ENCODE measurements at regions of chr12 and their contacts with region 1.

Region 1: GRCh38 chr12:76455582-76456345 is 103.8 kb downstream of the OSBPL8 start:
- DNase-seq: peak; percentile 89
- H3K4me3 ChIP-seq: no peak overlapping the region
- H3K27ac ChIP-seq: peak overlapping the region; percentile 97
- H3K4me1 ChIP-seq: peaks cover 27% of the 10 kb centered on the region
- H3K27me3 ChIP-seq: no peaks in the 10 kb centered on the region
- CTCF ChIP-seq: peak; percentile 70 to 73

Region 2: DNA sequence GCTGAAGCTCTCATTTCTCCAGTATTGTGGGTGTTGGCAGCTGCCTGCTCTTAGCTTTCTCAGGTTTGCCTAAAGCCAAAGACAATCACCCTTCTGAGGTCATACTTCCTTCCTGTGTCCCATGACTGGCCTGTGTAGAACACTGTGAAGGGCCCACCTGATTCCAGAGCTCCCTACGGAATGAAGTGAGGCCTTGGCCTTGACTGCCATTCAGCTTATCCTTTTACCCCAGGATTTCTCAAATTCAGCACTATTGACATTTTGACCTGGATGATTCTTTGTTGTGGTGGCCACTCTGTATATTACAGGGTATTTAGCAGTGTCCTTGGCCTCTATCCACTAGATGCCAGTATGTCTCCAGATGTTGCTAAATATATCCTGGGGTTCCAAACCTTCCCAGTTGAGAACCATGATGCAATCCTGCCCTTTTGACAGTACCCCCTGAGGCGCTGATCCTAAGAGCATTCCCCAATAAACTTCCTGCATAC is 832.1 kb before region 1 on chr12:
- CTCF ChIA-PET with region 1: no interaction called
- dilution Hi-C with region 1: no loop called
- in situ Hi-C with region 1: no loop called
- intact Hi-C with region 1: loop called (anchors 5 kb)
- DNase-seq: peak; percentile 53
- H3K4me3 ChIP-seq: no peak overlapping the region
- H3K27ac ChIP-seq: peak overlapping the region; percentile 18
- H3K4me1 ChIP-seq: peaks cover 9% of the 10 kb centered on the region
- H3K27me3 ChIP-seq: no peaks in the 10 kb centered on the region
- CTCF ChIP-seq: peak; percentile 30 to 60

Region 3: GRCh38 chr12:76074701-76075336 is 380.9 kb before region 1 on chr12:
- CTCF ChIA-PET with region 1: no interaction called
- dilution Hi-C with region 1: no loop called
- in situ Hi-C with region 1: loop called in 1 of 2 experiments (anchors 25 kb)
- intact Hi-C with region 1: no loop called
- DNase-seq: peak; percentile 8
- H3K4me3 ChIP-seq: no peak overlapping the region
- H3K27ac ChIP-seq: no peak overlapping the region
- H3K4me1 ChIP-seq: peaks cover 3% of the 10 kb centered on the region
- H3K27me3 ChIP-seq: no peaks in the 10 kb centered on the region
- CTCF ChIP-seq: no peak

Region 4: GRCh38 chr12:76277480-76277879 is 178.3 kb before region 1 on chr12:
- CTCF ChIA-PET with region 1: no interaction called
- dilution Hi-C with region 1: no loop called
- in situ Hi-C with region 1: no loop called
- intact Hi-C with region 1: loop called (anchors 10 kb)
- DNase-seq: peak; percentile 61
- H3K4me3 ChIP-seq: no peak overlapping the region
- H3K27ac ChIP-seq: no peak overlapping the region
- H3K4me1 ChIP-seq: peaks cover 37% of the 10 kb centered on the region
- H3K27me3 ChIP-seq: no peaks in the 10 kb centered on the region
- CTCF ChIP-seq: no peak

Region 5: GRCh38 chr12:76290963-76291863 is 164.6 kb before region 1 on chr12:
- CTCF ChIA-PET with region 1: no interaction called
- dilution Hi-C with region 1: no loop called
- in situ Hi-C with region 1: no loop called
- intact Hi-C with region 1: no loop called
- DNase-seq: no peak
- H3K4me3 ChIP-seq: no peak overlapping the region
- H3K27ac ChIP-seq: no peak overlapping the region
- H3K4me1 ChIP-seq: no peaks in the 10 kb centered on the region
- H3K27me3 ChIP-seq: no peaks in the 10 kb centered on the region
- CTCF ChIP-seq: no peak

Region 6: DNA sequence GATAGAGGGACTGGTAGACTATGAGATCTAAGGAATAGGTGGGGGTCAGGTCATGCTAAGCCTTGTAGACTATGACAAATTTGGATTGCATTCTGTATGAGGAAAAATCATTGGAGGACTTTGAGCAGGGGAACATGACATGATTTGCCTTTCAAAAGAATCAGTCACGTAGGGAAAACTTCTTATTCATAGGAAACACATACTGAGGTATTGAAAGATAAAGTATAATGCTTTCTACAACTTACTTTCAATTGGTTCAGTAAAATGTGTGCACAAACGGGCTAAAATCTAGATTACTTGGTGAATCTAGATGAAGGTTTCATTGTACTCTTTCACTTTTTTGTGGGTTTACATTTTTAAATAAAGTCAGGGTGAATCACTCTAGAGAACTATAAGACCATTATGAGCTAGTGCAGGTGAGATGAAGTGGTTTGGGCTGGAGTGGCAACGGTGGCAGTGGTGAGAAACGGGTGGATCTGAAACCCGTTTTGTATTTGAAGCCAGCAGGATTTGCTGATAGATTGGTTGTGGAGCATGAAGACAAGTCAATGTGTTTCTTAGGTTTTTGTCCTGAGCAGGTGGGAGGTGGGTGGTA is 114.2 kb before region 1 on chr12:
- CTCF ChIA-PET with region 1: no interaction called
- dilution Hi-C with region 1: no loop called
- in situ Hi-C with region 1: no loop called
- intact Hi-C with region 1: no loop called
- DNase-seq: peak; percentile 68
- H3K4me3 ChIP-seq: no peak overlapping the region
- H3K27ac ChIP-seq: no peak overlapping the region
- H3K4me1 ChIP-seq: peaks cover 16% of the 10 kb centered on the region
- H3K27me3 ChIP-seq: no peaks in the 10 kb centered on the region
- CTCF ChIP-seq: no peak

Region 7: DNA sequence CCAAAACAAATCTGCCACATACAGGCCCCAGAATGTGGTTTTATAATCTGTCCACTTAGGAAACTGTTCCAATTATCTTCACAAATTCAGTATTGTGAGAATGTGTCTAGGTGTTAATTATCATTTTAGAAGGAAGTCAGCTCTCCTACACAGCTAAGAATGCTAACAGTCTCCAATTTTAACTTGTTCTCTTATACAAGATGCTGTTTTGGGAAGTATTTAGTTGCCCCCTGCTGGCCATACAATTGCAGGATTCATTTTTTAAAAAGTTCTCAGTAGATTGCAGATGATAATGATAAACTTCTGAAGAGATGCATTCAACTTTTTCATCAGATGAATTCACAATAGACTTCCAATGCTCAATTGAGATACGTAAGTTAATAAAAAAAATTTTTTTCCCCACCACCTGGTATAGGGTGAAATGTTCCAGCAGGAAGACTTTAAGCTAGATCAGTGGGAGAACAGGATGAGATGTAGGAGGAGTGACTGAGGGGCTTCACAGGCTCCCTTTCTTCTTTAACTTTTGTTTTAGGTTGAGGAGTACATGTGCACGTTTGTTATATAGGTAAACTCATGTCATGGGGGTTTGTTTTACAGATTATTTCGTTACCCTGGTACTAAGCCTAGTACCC is 131.1 kb after region 1 on chr12:
- CTCF ChIA-PET with region 1: no interaction called
- dilution Hi-C with region 1: no loop called
- in situ Hi-C with region 1: no loop called
- intact Hi-C with region 1: loop called (anchors 2 kb)
- DNase-seq: peak; percentile 43
- H3K4me3 ChIP-seq: no peak overlapping the region
- H3K27ac ChIP-seq: no peak overlapping the region
- H3K4me1 ChIP-seq: peaks cover 7% of the 10 kb centered on the region
- H3K27me3 ChIP-seq: no peaks in the 10 kb centered on the region
- CTCF ChIP-seq: peak; percentile 73 to 74

Measured in mammary epithelial cell (primary cell).